Caco-2 (cell line): ENCODE measurements at regions of chr10 and their contacts with region 1.

Region 1: GRCh38 chr10:102835007-102835482 is 2.2 kb downstream of the CYP17A1 start:
- DNase-seq: peak; percentile 82 to 84
- H3K4me3 ChIP-seq: no peak overlapping the region
- H3K4me3 Mint-ChIP-seq: no peak overlapping the region
- H3K27ac Mint-ChIP-seq: no peak overlapping the region
- H3K4me1 ChIP-seq: peaks cover 14% of the 10 kb centered on the region; the same call in 1 of the 2 replicates
- H3K4me1 Mint-ChIP-seq: peaks cover 16% of the 10 kb centered on the region
- H3K27me3 ChIP-seq: no peaks in the 10 kb centered on the region
- H3K27me3 Mint-ChIP-seq: no peaks in the 10 kb centered on the region
- CTCF ChIP-seq: peak; percentile 88 to 91

Region 2: DNA sequence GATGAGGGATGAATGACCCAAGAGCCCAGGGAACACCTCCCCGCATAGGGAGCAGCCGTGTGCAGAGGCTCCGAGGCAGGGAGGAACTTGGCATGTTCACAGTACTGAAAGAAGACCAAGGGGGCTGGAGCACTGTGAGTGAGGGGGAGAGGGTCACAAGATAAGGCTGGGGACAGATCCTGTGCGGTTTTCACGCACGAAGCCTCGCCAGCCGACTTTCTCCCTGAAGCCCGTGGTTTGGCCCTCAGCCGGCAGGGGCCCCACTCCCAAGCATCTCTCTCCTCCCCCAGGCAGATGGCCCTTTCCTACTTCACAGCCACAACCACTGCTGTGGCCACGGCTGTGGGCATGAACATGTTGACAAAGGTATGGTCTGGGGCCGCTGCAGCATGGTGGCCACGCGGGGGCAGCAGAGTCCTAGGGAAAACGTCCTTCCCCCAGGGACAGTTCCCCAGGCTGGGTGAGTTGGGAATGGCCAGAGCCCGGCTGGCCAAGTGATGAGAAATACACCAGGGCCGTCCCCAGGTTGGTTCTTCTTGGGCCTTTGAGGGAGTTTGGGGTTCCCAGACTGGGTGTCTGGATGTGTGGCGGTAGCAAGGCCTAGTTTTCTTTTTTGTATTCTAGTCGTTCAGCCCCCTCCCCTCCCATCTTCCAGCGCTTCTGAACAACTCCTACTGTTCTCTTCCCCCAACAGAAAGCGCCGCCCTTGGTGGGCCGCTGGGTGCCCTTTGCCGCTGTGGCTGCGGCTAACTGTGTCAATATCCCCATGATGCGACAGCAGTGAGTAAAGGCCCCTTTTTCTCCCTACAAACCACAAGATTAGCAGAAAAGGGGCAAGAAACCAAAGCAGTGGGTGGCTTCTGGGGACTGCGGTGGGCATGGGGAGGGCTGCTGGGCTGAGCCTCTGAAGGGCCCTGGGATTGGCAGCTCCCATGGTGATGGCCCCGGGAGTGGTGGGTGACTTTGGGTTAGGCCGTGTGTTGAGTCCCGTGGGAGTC is 105.7 kb before region 1 on chr10:
- CTCF ChIA-PET with region 1: no interaction called
- POLR2A ChIA-PET with region 1: no interaction called
- intact Hi-C with region 1: loop called (anchors 1 kb)
- DNase-seq: peak; percentile 77 to 88
- H3K4me3 ChIP-seq: no peak overlapping the region
- H3K4me3 Mint-ChIP-seq: no peak overlapping the region
- H3K27ac Mint-ChIP-seq: peak overlapping the region; percentile 5
- H3K4me1 ChIP-seq: no peaks in the 10 kb centered on the region
- H3K4me1 Mint-ChIP-seq: no peaks in the 10 kb centered on the region
- H3K27me3 ChIP-seq: no peaks in the 10 kb centered on the region
- H3K27me3 Mint-ChIP-seq: no peaks in the 10 kb centered on the region
- CTCF ChIP-seq: peak; percentile 91 to 95

Region 3: GRCh38 chr10:102869258-102870198 is 34.5 kb after region 1 on chr10 and contains the start of gene AS3MT:
- CTCF ChIA-PET with region 1: no interaction called
- POLR2A ChIA-PET with region 1: no interaction called
- intact Hi-C with region 1: loop called (anchors 2 kb)
- DNase-seq: peak; percentile 86 to 87
- H3K4me3 ChIP-seq: peak within 1 kb of the TSS; percentile 50
- H3K4me3 Mint-ChIP-seq: peak within 1 kb of the TSS; percentile 78
- H3K27ac Mint-ChIP-seq: peak within 1 kb of the TSS; percentile 40
- H3K4me1 ChIP-seq: peaks cover 6% of the 10 kb centered on the region; the same call in 1 of the 2 replicates
- H3K4me1 Mint-ChIP-seq: peaks cover 9% of the 10 kb centered on the region
- H3K27me3 ChIP-seq: no peaks in the 10 kb centered on the region
- H3K27me3 Mint-ChIP-seq: no peaks in the 10 kb centered on the region
- CTCF ChIP-seq: no peak
- total RNA-seq, gene AS3MT: 6.4 and 8.6 TPM in 2 replicates

Region 4: DNA sequence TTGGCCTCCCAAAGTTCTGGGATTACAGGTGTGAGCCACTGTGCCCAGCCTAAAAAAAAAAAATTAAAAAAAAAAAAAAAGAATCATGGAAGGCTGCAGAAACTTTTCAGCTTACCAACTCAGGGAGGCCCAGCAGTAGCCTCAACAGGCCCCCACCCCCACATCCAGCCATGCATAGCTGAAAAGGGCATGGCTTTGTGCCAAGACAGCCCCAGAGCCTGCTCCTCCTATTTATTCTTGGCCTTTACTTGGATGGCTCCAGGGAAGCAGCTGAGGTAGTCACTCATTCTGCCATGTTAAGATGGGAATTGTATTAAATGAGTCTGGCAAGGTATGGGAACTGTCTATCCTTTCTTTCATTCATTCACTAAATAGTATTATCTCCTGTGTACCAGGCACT is 69.3 kb after region 1 on chr10:
- CTCF ChIA-PET with region 1: interaction called, 19 read pairs
- POLR2A ChIA-PET with region 1: no interaction called
- intact Hi-C with region 1: loop called (anchors 1 kb)
- DNase-seq: no peak
- H3K4me3 ChIP-seq: no peak overlapping the region
- H3K4me3 Mint-ChIP-seq: no peak overlapping the region
- H3K27ac Mint-ChIP-seq: no peak overlapping the region
- H3K4me1 ChIP-seq: no peaks in the 10 kb centered on the region
- H3K4me1 Mint-ChIP-seq: no peaks in the 10 kb centered on the region
- H3K27me3 ChIP-seq: no peaks in the 10 kb centered on the region
- H3K27me3 Mint-ChIP-seq: no peaks in the 10 kb centered on the region
- CTCF ChIP-seq: no peak

Region 5: DNA sequence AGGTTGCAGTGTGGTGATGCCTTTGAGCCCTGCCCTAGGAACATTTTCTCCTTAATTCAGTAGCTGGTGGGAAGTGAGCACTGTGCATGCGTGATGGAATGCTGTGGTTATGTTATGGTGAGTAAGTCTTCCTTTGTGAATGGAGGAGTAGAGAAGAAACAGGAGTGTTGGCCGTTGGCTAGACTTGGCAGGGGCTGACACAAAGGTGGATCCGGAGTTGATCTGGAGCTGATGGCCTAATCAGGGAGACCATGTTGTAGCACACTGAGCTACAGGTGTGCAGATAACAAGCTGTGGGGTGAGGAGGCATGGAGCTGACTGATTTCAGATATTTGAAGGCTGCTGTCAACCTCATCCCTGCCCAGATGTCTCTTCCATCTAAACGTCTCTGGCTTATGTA is 205.4 kb after region 1 on chr10:
- CTCF ChIA-PET with region 1: no interaction called
- POLR2A ChIA-PET with region 1: no interaction called
- intact Hi-C with region 1: no loop called
- DNase-seq: no peak
- H3K4me3 ChIP-seq: no peak overlapping the region
- H3K4me3 Mint-ChIP-seq: no peak overlapping the region
- H3K27ac Mint-ChIP-seq: no peak overlapping the region
- H3K4me1 ChIP-seq: no peaks in the 10 kb centered on the region
- H3K4me1 Mint-ChIP-seq: no peaks in the 10 kb centered on the region
- H3K27me3 ChIP-seq: no peaks in the 10 kb centered on the region
- H3K27me3 Mint-ChIP-seq: no peaks in the 10 kb centered on the region
- CTCF ChIP-seq: no peak

Region 6: DNA sequence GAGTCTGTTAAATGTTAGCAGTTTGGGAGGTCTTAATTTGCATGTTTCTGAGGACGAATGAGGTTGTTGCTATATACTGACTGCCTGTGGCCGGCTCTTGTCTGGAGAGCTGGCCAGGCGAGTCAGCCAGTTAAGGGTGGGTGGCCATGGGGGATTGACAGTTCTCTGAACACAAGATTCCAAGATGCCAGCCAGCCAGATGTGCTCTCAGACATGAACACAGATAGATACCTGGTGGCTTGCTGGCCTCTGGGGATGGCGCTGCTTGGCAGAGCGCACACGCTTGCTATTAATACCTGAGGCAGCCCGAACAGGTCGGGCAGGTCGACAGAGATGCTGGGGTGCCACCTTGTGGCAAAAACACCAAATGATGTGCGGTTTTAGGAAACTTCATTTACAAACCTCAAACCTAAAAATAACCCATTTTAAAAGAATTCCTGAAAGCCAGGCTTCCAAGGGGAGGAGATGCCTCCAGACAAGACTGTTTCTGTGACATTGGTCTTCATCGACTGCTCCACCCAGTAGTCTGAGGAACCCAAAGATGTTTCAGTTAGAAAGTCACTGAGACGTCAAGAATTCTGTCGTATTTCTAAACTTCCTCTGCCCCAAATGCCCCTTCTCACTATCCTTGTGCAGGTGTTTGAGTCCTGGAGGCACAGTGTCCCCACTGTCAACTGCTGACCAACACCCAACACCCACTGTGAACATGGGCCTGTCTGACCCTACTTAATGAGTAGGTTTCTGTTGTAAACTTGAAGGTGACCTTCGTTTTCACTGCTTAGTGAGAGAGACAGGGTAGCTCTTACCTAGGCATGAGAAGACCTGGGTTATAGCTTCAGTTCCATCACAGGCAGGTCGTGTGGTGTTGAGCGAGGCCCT is 234.6 kb after region 1 on chr10:
- CTCF ChIA-PET with region 1: no interaction called
- POLR2A ChIA-PET with region 1: no interaction called
- intact Hi-C with region 1: loop called (anchors 1 kb)
- DNase-seq: peak; percentile 65 to 78
- H3K4me3 ChIP-seq: no peak overlapping the region
- H3K4me3 Mint-ChIP-seq: no peak overlapping the region
- H3K27ac Mint-ChIP-seq: no peak overlapping the region
- H3K4me1 ChIP-seq: peaks cover 3% of the 10 kb centered on the region; the same call in 1 of the 2 replicates
- H3K4me1 Mint-ChIP-seq: no peaks in the 10 kb centered on the region
- H3K27me3 ChIP-seq: no peaks in the 10 kb centered on the region
- H3K27me3 Mint-ChIP-seq: no peaks in the 10 kb centered on the region
- CTCF ChIP-seq: peak; percentile 77 to 78